SK-N-SH (cell line): ENCODE measurements at regions of chr4 and their contacts with region 1.

Region 1: DNA sequence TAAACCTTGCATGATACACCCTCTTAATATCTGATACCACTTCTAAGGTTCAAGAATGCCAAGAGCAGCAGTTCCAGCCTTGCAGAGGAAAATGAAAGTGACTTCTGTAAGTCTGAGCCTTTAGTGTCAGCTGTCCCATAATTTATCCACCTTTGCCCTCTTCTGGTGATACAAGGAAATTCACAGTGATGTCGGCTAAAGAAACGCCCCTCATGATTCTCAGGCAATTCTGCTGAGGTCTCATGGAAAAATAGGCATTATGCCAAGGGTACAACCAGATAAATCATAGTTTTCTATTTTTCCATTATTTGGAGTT is 172.2 kb upstream of the CXCL13 start:
- DNase-seq: peak; percentile 40
- H3K4me3 ChIP-seq: no peak overlapping the region; a peak in 1 of 4 replicates
- H3K27ac ChIP-seq: no peak overlapping the region
- H3K4me1 ChIP-seq: no peaks in the 10 kb centered on the region
- H3K27me3 ChIP-seq: peaks cover 19% of the 10 kb centered on the region; the same call in 1 of the 2 replicates
- CTCF ChIP-seq: peak; percentile 60
- EP300 ChIP-seq: no peak
- RAD21 ChIP-seq: peak; percentile 68

Region 2: GRCh38 chr4:77385124-77385969 is 48.0 kb before region 1 on chr4:
- CTCF ChIA-PET with region 1: interaction called, 17 read pairs
- POLR2A ChIA-PET with region 1: no interaction called
- DNase-seq: peak; percentile 22
- H3K4me3 ChIP-seq: no peak overlapping the region
- H3K27ac ChIP-seq: no peak overlapping the region
- H3K4me1 ChIP-seq: no peaks in the 10 kb centered on the region
- H3K27me3 ChIP-seq: 0 out of 2 replicates have a peak, but pooled peaks cover 9% of the 10 kb centered on the region
- CTCF ChIP-seq: peak; percentile 83
- EP300 ChIP-seq: no peak
- RAD21 ChIP-seq: peak; percentile 81

Region 3: DNA sequence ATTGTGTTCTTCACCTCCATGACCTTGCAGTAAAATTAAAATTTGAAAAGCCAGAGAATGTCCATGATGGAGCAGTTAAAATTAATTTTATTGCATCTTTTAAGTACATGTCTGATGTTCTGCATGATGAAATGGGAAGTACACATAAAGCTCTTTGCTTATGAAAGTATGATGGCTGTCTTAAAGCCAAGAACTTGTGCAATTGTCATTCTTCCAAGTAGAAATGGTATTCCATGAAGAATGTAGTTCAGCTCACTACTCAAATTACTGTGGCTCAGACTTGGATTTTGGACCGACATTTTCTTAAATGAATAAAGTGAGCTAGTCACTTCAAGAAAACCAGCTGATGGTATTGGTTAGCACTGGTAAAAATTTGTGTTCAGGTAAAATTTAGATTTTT is 10.6 kb after region 1 on chr4:
- CTCF ChIA-PET with region 1: interaction called, 10 read pairs
- POLR2A ChIA-PET with region 1: no interaction called
- DNase-seq: no peak
- H3K4me3 ChIP-seq: no peak overlapping the region
- H3K27ac ChIP-seq: no peak overlapping the region
- H3K4me1 ChIP-seq: no peaks in the 10 kb centered on the region
- H3K27me3 ChIP-seq: no peaks in the 10 kb centered on the region
- CTCF ChIP-seq: no peak
- EP300 ChIP-seq: no peak
- RAD21 ChIP-seq: no peak